Right ventricle myocardium inferior (tissue), 1 donor: ENCODE measurements at regions of chr19 and their contacts with region 1.

Region 1: DNA sequence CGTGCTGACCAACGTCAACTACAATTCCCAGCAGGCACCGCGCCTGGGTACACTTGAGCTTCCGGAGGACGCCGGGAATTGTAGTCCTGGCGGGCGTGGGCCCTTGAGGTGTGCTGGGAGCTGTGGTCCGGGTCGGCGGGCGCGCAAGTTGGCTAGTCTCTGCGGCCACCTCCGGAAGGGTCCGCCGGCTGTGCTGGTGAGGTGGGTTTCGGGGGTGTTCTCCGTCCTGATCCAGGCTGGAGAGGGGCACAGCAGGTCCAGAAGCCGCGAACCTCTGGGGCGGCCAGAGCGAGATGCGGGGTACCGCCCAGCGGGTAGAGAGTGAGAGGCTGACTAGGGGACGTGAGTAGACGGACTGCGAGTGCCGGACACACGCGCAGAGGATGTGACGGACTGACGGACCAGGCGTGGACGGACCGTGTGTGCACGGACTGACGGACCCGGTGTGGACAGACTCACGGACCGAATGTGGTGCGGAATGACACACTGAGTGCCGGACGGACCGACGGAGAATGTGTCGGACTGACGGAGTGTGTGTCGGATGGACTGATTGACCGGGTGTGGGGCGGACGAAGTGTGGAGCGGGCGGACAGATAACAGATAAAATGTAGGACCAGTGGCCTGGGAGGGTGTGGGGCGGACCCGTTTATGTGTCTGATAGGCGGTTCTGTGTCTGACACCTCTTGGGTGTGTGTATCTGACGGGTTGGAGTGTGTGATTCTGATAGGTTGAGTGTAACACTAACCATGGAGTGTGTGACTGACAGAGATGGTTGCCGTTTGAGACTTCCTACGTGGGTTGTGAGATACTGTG is at the start of gene ZSCAN22:
- DNase-seq: peak; percentile 99
- ATAC-seq: peak; percentile 97
- total RNA-seq, gene ZSCAN22: 1.8 TPM

Region 2: GRCh38 chr19:58380722-58381466 is 53.8 kb after region 1 on chr19 and contains the start of gene ZNF837:
- intact Hi-C with region 1: loop called (anchors 2 kb)
- DNase-seq: peak; percentile 98
- ATAC-seq: peak; percentile 95
- total RNA-seq, gene ZNF837: 0.22 TPM